H1 (cell line): ENCODE measurements at regions of chr20 and their contacts with region 1.

Region 1: GRCh38 chr20:4720041-4720976 is 1.4 kb upstream of the PRND start:
- DNase-seq: peak; percentile 38 to 86
- H3K4me3 ChIP-seq: no peak overlapping the region
- H3K27ac ChIP-seq: peak overlapping the region; percentile 46
- H3K4me1 ChIP-seq: peaks cover 3 to 9% (median 3%) of the 10 kb centered on the region in 4 experiments
- H3K27me3 ChIP-seq: no peaks in the 10 kb centered on the region
- CTCF ChIP-seq: peak; percentile 62 to 94 (median 69)
- EP300 ChIP-seq: no peak
- POLR2A ChIP-seq: no peak
- RAD21 ChIP-seq: peak; percentile 97 to 99

Region 2: GRCh38 chr20:4607287-4607713 is 113.0 kb before region 1 on chr20:
- CTCF ChIA-PET with region 1: interaction called, 104 read pairs
- POLR2A ChIA-PET with region 1: interaction called, 4 read pairs
- DNase-seq: peak; percentile 15 to 69
- H3K4me3 ChIP-seq: no peak overlapping the region
- H3K27ac ChIP-seq: no peak overlapping the region
- H3K4me1 ChIP-seq: no peaks in the 10 kb centered on the region; a peak in 1 of 7 replicates
- H3K27me3 ChIP-seq: no peaks in the 10 kb centered on the region
- CTCF ChIP-seq: peak; percentile 22 to 84 (median 82)
- EP300 ChIP-seq: no peak
- POLR2A ChIP-seq: no peak
- RAD21 ChIP-seq: peak; percentile 97

Region 3: DNA sequence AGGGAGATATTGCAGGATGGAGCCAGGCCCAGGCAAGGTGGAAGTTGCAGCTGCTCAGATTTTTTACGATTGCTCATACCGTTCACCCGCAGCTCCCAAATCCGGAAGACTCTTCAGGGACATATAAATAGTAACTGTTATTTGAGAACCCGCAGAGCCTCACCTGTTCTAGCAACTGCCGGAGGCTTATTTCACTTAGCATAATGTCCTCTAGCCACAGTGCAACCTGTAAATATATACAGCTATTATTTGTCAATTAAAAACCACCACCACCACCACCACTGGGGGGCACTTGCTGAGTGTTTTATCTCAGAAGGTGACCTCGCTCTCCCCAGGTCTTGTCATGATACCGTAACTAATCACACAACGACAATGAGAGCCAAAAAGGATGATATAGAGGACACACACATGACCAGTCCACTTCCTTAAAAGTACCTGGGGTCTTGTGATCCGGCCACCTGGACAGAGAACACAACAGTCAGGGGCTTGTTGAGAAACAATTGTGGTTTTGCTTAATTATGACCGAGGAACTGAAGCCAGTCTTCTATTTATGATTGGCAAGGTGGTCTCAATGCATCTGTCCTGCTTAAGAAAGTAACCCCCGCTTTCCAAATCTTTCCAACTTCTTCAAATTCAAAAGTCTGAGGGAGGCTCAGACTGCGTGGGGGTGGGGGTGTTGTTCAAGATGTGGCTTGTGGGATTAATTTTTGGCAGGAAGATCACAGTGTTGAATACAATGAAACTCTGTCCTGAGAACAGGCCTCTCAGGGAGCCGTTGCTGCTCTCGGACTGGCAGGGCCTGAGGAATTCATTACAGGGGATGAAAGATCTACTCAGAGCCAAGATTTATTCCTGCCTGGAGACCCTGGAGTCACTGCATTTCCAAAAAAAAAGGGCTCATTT is 106.3 kb before region 1 on chr20:
- CTCF ChIA-PET with region 1: interaction called, 104 read pairs
- POLR2A ChIA-PET with region 1: interaction called, 4 read pairs
- DNase-seq: peak in 1 of 2 experiments; percentile 68
- H3K4me3 ChIP-seq: no peak overlapping the region
- H3K27ac ChIP-seq: no peak overlapping the region
- H3K4me1 ChIP-seq: no peaks in the 10 kb centered on the region; a peak in 2 of 7 replicates
- H3K27me3 ChIP-seq: no peaks in the 10 kb centered on the region
- CTCF ChIP-seq: peak in 2 of 3 experiments; percentile 55 to 70; a peak in 3 of 4 replicates
- EP300 ChIP-seq: no peak
- POLR2A ChIP-seq: no peak
- RAD21 ChIP-seq: peak; percentile 79 to 88

Region 4: DNA sequence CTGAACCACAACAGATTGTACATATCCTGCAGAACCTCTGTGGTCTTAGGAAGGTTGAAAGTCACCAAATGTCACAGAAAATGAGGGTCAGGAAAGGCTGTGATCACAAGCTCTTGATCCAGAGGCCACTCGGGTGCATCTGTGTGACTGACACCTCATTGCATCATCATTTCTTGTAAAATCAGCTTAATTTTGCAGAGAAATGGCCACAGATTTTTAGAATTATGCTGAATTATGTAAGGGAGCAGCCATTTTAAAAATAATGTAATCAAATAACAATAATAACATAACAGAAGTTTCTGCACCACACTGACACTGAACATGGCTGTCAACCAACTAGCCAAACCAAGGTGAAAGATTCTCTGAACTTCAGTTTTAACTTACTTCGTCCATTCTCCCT is 31.1 kb before region 1 on chr20:
- CTCF ChIA-PET with region 1: interaction called, 10 read pairs
- POLR2A ChIA-PET with region 1: interaction called, 3 read pairs
- DNase-seq: no peak
- H3K4me3 ChIP-seq: no peak overlapping the region
- H3K27ac ChIP-seq: no peak overlapping the region
- H3K4me1 ChIP-seq: peaks cover 0 to 3% (median under 1%) of the 10 kb centered on the region in 4 experiments; a peak in 4 of 7 replicates
- H3K27me3 ChIP-seq: no peaks in the 10 kb centered on the region; a peak in 3 of 7 replicates
- CTCF ChIP-seq: no peak
- EP300 ChIP-seq: no peak
- POLR2A ChIP-seq: no peak
- RAD21 ChIP-seq: no peak